ENCODE measurements at regions of chr12 and their contacts with region 1.

Region 1: GRCh38 chr12:94187361-94187760 is 39.0 kb downstream of the PLXNC1 start:
- DNase-seq: no peak
- CTCF ChIP-seq: no peak

Region 2: DNA sequence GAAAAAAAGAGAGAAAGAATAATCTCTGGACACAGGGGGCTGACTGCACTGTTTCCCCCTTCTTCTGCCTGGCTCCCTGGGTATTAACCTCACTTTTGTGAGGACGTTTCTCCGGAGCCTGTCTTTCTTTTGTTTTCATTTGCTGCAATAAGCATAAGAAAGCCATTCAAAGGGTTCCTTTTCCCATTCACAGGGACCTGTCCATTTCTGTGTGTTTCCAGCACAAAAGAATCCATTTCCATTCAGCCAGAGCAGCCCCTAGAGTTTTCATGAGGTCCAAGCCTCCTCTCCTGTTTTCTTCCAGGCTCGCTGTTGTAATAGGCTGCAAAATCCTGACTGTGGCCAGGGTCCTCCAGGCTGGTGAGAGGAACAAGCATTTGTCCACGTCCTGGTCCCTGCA is 22.2 kb before region 1 on chr12:
- CTCF ChIA-PET with region 1: no interaction called
- POLR2A ChIA-PET with region 1: no interaction called
- DNase-seq: no peak
- CTCF ChIP-seq: no peak

Region 3: GRCh38 chr12:94175763-94176668 is 11.3 kb before region 1 on chr12:
- CTCF ChIA-PET with region 1: interaction called, 18 read pairs
- POLR2A ChIA-PET with region 1: no interaction called
- DNase-seq: no peak
- CTCF ChIP-seq: no peak